A549 (cell line): ENCODE measurements at regions of chr1 and their contacts with region 1.

Region 1: GRCh38 chr1:45583264-45583665 is 576 bp upstream of the NASP start:
- DNase-seq: peak; percentile 94 to 97
- ATAC-seq: peak; percentile 90 to 91
- H3K4me3 ChIP-seq: peak overlapping the region; percentile 89
- H3K27ac ChIP-seq: peak overlapping the region; percentile 91 to 98
- H3K4me1 ChIP-seq: peaks cover 13% of the 10 kb centered on the region; the same call in 2 of the 3 replicates
- CTCF ChIP-seq: no peak
- EP300 ChIP-seq: no peak
- POLR2A ChIP-seq: no peak
- RAD21 ChIP-seq: no peak

Region 2: GRCh38 chr1:45521398-45522323 is 61.6 kb before region 1 on chr1 and contains the start of gene PRDX1:
- CTCF ChIA-PET with region 1: no interaction called
- POLR2A ChIA-PET with region 1: interaction called, 27 read pairs
- DNase-seq: peak; percentile 72 to 95
- ATAC-seq: peak; percentile 84 to 86
- H3K4me3 ChIP-seq: peak within 1 kb of the TSS; percentile 76
- H3K27ac ChIP-seq: peak within 1 kb of the TSS; percentile 100
- H3K4me1 ChIP-seq: peaks cover 62% of the 10 kb centered on the region
- CTCF ChIP-seq: no peak
- EP300 ChIP-seq: 0 out of 5 replicates have a peak, but pooled peaks of 1 of the 2 experiments have one; percentile 17
- POLR2A ChIP-seq: peak; percentile 99
- RAD21 ChIP-seq: no peak
- polyA plus RNA-seq, gene PRDX1: 2,329 and 2,391 TPM in 2 replicates

Region 3: DNA sequence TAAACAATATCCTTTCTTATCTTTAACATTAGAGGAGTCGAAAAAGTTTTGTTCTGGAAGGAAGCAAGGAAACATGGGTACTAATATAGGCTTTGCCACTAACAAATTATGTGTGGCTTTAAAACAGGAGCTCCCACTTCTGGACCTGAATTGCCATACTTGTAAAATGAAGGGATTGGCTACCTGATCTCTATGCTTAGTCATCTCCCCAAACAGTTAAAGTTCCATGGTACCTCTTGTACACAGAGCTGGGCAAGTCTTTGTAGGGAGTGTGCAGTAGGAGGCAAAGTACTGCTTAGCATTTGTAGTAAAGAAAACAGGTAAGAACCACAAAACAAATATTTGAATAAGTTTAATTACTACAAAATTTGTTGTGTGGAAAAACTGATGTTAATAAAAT is 301.4 kb after region 1 on chr1:
- CTCF ChIA-PET with region 1: no interaction called
- POLR2A ChIA-PET with region 1: interaction called, 10 read pairs
- DNase-seq: peak in 1 of 2 experiments; percentile 55
- ATAC-seq: peak in 1 of 2 experiments; percentile 68; a peak in 3 of 6 replicates
- H3K4me3 ChIP-seq: no peak overlapping the region
- H3K27ac ChIP-seq: peak overlapping the region; percentile 37 to 71; a peak in 5 of 6 replicates
- H3K4me1 ChIP-seq: peaks cover 37% of the 10 kb centered on the region
- CTCF ChIP-seq: no peak
- EP300 ChIP-seq: no peak
- POLR2A ChIP-seq: no peak
- RAD21 ChIP-seq: no peak